Kidney (tissue), 22 donors: ENCODE measurements at regions of chr11 and their contacts with region 1.

Region 1: GRCh38 chr11:2151500-2152257 is 9.3 kb downstream of the INS start:
- DNase-seq: peak in 4 of 5 donors; percentile 86 to 92 (median 90)
- H3K4me3 ChIP-seq: peak overlapping the region in 1 of 3 donors; percentile 27
- H3K27ac ChIP-seq: no peak overlapping the region
- H3K4me1 ChIP-seq: peaks cover 0 to 2% (median 0%) of the 10 kb centered on the region in 3 donors
- H3K27me3 ChIP-seq: no peaks in the 10 kb centered on the region
- CTCF ChIP-seq: peak; percentile 96

Region 2: GRCh38 chr11:1652771-1653540 is 498.7 kb before region 1 on chr11:
- intact Hi-C with region 1: loop called (anchors 10 kb)
- DNase-seq: peak; percentile 76 to 92 (median 81)
- H3K4me3 ChIP-seq: no peak overlapping the region
- H3K27ac ChIP-seq: no peak overlapping the region
- H3K4me1 ChIP-seq: peaks cover 0 to 10% (median 0%) of the 10 kb centered on the region in 3 donors
- H3K27me3 ChIP-seq: no peaks in the 10 kb centered on the region
- CTCF ChIP-seq: peak; percentile 98

Region 3: GRCh38 chr11:1694064-1694845 is 457.4 kb before region 1 on chr11:
- intact Hi-C with region 1: loop called (anchors 5 kb)
- DNase-seq: peak; percentile 88 to 95 (median 92)
- H3K4me3 ChIP-seq: peak overlapping the region in 1 of 3 donors; percentile 52
- H3K27ac ChIP-seq: no peak overlapping the region
- H3K4me1 ChIP-seq: peaks cover 0 to 7% (median 4%) of the 10 kb centered on the region in 3 donors
- H3K27me3 ChIP-seq: no peaks in the 10 kb centered on the region
- CTCF ChIP-seq: peak; percentile 90

Region 4: GRCh38 chr11:1837171-1838076 is 314.3 kb before region 1 on chr11:
- intact Hi-C with region 1: loop called (anchors 10 kb)
- DNase-seq: peak; percentile 84 to 91 (median 87)
- H3K4me3 ChIP-seq: no peak overlapping the region
- H3K27ac ChIP-seq: no peak overlapping the region
- H3K4me1 ChIP-seq: peaks cover 0 to 8% (median 0%) of the 10 kb centered on the region in 3 donors
- H3K27me3 ChIP-seq: no peaks in the 10 kb centered on the region
- CTCF ChIP-seq: peak; percentile 83